CD8-positive, alpha-beta memory T cell (primary cell): ENCODE measurements at regions of chr13 and their contacts with region 1.

Region 1: DNA sequence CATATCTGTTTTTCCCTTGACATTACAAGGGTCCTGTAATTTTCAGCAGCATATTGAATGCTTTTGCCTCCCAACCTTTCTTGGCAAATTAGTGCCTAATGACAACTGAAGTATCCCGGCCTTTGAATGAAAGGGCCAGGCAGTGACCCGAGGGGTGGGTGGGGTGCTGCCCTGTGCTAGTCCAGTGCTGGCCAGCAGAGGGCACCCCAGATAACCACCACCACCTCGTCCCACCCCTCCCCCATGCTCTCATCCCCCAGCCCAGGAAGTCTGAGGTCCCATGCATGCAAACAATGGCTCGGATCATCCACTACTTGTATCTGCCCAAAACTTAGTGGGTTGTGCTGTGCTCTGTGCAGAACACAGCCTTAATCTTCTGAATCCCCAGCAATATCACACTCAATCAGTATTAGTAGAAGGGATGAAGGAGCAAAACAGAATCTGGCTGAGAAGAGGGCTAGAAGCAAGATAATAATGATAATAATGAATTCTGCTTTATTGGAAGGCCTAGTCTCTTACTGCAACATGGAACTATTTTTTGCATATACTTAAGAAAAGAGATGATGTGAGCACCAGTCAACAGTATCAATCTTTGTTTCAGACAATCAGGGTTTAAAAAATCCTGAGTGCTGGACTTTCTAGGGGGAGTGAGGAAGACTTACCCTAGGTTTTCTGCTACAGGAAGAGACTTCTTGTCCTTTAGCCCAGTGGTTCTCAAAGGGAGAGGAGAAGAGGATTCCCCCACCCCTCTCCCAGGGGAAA is 3.8 kb downstream of the ATP12A start:
- DNase-seq: peak; percentile 27 to 75 (median 46)
- H3K4me3 ChIP-seq: no peak overlapping the region
- H3K4me3 Mint-ChIP-seq: peak overlapping the region; percentile 21 to 84 (median 30)
- H3K27ac ChIP-seq: no peak overlapping the region
- H3K27ac Mint-ChIP-seq: peak overlapping the region in 5 of 8 donors; percentile 15 to 57 (median 39)
- H3K4me1 ChIP-seq: peaks cover 35% of the 10 kb centered on the region
- H3K4me1 Mint-ChIP-seq: peaks cover 30 to 39% (median 33%) of the 10 kb centered on the region in 3 donors
- H3K27me3 ChIP-seq: peaks cover 12% of the 10 kb centered on the region
- H3K27me3 Mint-ChIP-seq: peaks cover 31 to 38% of the 10 kb centered on the region in 2 donors

Region 2: GRCh38 chr13:24671386-24672107 is 12.5 kb before region 1 on chr13:
- CTCF ChIA-PET with region 1: interaction called, 15 read pairs
- POLR2A ChIA-PET with region 1: no interaction called
- DNase-seq: peak in 1 of 5 donors; percentile 17
- H3K4me3 ChIP-seq: no peak overlapping the region
- H3K4me3 Mint-ChIP-seq: no peak overlapping the region
- H3K27ac ChIP-seq: no peak overlapping the region
- H3K27ac Mint-ChIP-seq: peak overlapping the region in 1 of 8 donors; percentile 19
- H3K4me1 ChIP-seq: peaks cover 8% of the 10 kb centered on the region
- H3K4me1 Mint-ChIP-seq: peaks cover 4 to 11% (median 10%) of the 10 kb centered on the region in 3 donors
- H3K27me3 ChIP-seq: peaks cover 9% of the 10 kb centered on the region
- H3K27me3 Mint-ChIP-seq: peaks cover 8 to 27% of the 10 kb centered on the region in 2 donors